IMR-90 (cell line): ENCODE measurements at regions of chr17 and their contacts with region 1.

Region 1: GRCh38 chr17:81536299-81537290 is 8.4 kb downstream of the FSCN2 start:
- DNase-seq: peak; percentile 17
- ATAC-seq: no peak
- H3K4me3 ChIP-seq: no peak overlapping the region
- H3K27ac ChIP-seq: no peak overlapping the region
- H3K4me1 ChIP-seq: no peaks in the 10 kb centered on the region
- H3K27me3 ChIP-seq: peaks cover 10% of the 10 kb centered on the region; the same call in 1 of the 2 replicates
- CTCF ChIP-seq: no peak
- POLR2A ChIP-seq: no peak
- RAD21 ChIP-seq: no peak

Region 2: GRCh38 chr17:81397314-81398175 is 139.1 kb before region 1 on chr17:
- CTCF ChIA-PET with region 1: no interaction called
- POLR2A ChIA-PET with region 1: no interaction called
- dilution Hi-C with region 1: no loop called
- in situ Hi-C with region 1: no loop called
- intact Hi-C with region 1: no loop called
- DNase-seq: peak; percentile 62
- ATAC-seq: no peak
- H3K4me3 ChIP-seq: peak overlapping the region; percentile 57
- H3K27ac ChIP-seq: peak overlapping the region; percentile 90
- H3K4me1 ChIP-seq: peaks cover 20% of the 10 kb centered on the region
- H3K27me3 ChIP-seq: no peaks in the 10 kb centered on the region
- CTCF ChIP-seq: no peak
- POLR2A ChIP-seq: no peak
- RAD21 ChIP-seq: no peak

Region 3: DNA sequence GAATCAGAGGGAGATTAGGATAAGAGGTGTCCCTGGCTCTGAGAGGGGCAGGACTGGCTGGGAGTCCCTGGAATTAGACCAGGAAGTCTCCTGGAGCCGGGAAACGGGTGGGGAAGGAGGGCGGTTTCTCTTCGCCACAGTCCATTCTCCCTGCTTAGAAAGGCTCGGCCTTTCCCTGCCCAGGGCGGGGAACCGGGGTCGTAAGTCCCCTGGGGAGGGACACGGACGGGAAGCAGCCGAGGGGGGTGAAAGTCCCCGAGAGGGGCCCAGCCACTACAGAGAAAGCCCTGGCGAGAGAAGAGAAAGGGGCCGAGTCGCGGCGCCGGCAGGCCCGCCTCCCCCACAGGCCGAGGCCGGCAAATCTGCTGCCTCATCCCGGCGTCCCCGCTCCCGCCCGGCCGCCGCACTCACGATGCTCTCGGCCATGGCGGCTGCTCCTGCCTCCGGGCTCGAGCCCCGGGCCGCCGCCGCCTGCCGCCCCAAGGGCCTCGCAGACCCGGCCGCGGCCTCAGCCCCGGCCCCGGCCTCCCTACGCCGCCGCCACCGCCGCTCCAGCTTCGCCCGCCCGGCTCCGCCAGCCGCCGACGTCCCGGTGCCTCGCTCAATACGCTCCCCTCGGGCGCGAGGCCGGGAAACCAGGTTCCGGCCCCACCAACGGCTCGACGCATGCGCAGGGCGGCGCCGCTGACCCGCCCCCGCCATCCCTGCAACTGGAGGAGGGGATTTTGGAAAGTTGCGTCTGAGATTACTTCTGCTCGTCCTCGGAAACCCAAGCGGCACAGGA is 100.1 kb after region 1 on chr17 and contains the starts of genes NPLOC4 and TSPAN10:
- CTCF ChIA-PET with region 1: no interaction called
- POLR2A ChIA-PET with region 1: no interaction called
- dilution Hi-C with region 1: no loop called
- in situ Hi-C with region 1: no loop called
- intact Hi-C with region 1: no loop called
- DNase-seq: peak; percentile 80
- ATAC-seq: peak; percentile 94
- H3K4me3 ChIP-seq: peak within 1 kb of the TSS; percentile 57
- H3K27ac ChIP-seq: peak within 1 kb of the TSS; percentile 65
- H3K4me1 ChIP-seq: peaks cover 8% of the 10 kb centered on the region
- H3K27me3 ChIP-seq: no peaks in the 10 kb centered on the region
- CTCF ChIP-seq: no peak
- POLR2A ChIP-seq: peak; percentile 92
- RAD21 ChIP-seq: no peak; the same call in 1 of the 2 replicates
- total RNA-seq, gene NPLOC4: 66.1 and 70.4 TPM in 2 replicates
- total RNA-seq, gene TSPAN10: 1.1 and 1.4 TPM in 2 replicates

Region 4: DNA sequence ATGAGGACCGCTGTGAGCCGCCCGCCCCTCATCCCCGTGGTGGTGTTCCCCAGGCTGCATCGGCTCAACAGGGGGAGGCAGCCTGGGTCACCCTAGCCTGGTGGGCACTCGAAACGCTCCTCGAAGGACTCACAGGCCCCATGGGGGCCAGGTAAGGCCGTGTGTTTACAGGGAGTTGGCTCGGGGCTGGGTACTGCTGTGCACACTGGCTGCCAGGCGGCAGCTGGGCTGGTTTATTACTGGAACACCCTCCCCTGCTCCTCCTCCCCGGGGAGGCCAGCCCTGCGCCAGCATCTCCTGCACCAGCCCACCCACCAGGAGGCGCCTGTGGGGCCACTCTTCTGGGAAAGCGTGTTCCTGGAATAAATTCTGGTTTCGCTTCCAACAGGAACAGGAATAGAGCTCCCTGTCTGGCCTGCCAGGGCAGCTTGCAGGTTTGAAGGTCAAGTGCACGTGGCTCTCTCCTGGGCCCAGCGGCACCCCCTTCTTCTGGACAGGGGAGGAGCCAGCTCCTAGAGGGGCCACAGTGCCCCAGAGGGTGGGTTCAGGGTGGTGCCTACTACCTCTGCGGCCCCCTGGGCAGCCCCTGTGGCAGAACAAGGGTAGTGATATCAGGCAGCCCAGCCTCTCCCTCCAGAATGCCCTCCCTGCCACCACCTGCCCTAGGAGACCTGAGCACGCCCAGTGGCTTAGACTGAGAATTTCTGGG is 285.2 kb after region 1 on chr17:
- CTCF ChIA-PET with region 1: no interaction called
- POLR2A ChIA-PET with region 1: interaction called, 10 read pairs
- dilution Hi-C with region 1: no loop called
- in situ Hi-C with region 1: no loop called
- intact Hi-C with region 1: no loop called
- DNase-seq: peak; percentile 29
- ATAC-seq: peak; percentile 62
- H3K4me3 ChIP-seq: no peak overlapping the region
- H3K27ac ChIP-seq: no peak overlapping the region
- H3K4me1 ChIP-seq: peaks cover 4% of the 10 kb centered on the region; the same call in 1 of the 2 replicates
- H3K27me3 ChIP-seq: 0 out of 2 replicates have a peak, but pooled peaks cover 2% of the 10 kb centered on the region
- CTCF ChIP-seq: peak; percentile 52
- POLR2A ChIP-seq: no peak
- RAD21 ChIP-seq: 0 out of 2 replicates have a peak, but pooled peaks have one; percentile 19

Region 5: DNA sequence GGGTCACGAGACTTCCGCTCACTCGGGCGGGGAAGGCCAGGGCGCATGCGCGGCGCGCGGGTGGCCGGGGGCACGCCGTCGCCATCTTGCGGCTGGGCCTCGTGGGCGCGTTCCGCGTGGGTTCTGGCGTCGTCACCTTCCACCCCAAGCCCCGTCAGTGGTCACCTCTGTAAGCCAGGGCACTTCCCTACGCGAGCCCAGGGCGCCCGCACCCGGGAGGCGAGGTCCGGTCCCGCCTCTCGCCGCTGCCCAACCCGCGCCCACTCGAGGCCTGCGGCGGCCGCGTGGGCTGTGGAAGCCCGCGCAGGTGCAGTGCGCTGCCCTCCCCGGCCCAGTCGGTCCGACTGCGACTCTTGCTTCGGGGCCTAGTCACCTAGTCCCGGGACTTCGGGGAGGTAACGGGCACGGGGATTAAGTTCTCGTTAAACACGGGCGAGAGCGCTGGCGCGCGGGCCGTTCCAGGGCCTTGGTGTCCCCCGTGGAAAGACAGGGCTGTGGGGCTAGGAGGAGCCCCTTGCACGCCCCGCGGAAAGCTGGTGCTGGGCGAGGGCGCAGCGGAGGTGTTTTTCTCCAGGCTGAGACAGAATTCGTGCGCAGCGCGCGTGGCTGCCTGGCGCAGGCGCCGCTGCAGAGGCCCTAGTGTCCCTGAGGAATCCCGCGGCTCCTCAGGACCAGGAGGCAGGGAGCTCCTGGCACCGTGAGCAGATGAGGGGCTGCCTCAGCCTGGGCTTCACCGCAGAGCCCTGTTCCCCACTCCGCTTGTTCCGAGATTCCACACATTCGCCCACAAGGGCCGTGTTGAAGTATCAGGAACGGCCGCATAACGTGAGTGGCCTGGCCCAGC is 335.0 kb after region 1 on chr17:
- CTCF ChIA-PET with region 1: no interaction called
- POLR2A ChIA-PET with region 1: no interaction called
- dilution Hi-C with region 1: no loop called
- in situ Hi-C with region 1: no loop called
- intact Hi-C with region 1: no loop called
- DNase-seq: peak; percentile 83
- ATAC-seq: peak; percentile 4
- H3K4me3 ChIP-seq: peak overlapping the region; percentile 87
- H3K27ac ChIP-seq: peak overlapping the region; percentile 99
- H3K4me1 ChIP-seq: peaks cover 33% of the 10 kb centered on the region
- H3K27me3 ChIP-seq: no peaks in the 10 kb centered on the region
- CTCF ChIP-seq: peak; percentile 30; the same call in 1 of the 2 replicates
- POLR2A ChIP-seq: peak; percentile 4; the same call in 1 of the 2 replicates
- RAD21 ChIP-seq: no peak